Endothelial cell of umbilical vein (primary cell): ENCODE measurements at regions of chr20 and their contacts with region 1.

Region 1: DNA sequence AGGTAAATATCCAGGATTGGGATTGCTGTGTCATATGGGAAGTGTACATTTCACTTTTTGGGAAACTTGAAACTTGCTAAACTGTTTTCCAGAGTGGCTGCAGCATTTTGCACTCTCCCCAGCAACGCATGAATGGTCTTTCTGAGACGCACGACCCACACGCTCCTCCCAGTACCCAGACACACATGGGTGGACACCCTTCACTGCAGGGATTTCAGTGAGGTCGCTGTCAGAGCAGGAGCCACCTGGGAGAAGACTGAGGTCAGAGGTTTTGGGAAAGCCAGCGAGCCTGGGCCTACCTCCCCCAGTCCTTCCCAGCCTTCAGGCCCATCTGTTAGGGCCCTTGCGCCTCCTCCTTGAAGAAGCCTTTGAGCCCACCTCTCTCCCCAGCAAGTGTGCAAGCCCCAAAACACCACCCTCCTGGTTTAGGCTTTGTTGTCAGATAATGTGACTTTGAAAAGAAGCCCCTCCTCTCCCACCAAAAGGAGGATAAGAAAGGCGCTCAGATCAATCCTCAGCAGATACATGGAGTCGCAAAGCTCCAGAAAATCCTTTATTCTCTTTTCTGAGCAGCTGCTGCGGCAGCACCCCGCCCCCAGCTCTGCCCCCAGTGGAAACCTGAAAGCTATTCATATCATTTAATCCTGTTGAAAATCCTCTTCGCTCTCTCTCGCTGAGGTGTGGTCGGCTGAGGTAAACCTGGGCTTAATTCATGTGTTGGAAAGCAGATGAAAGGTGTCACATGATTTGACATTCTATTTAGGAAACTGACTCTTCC is 12.7 kb upstream of the JAG1 start:
- DNase-seq: no peak
- H3K4me3 ChIP-seq: no peak overlapping the region
- H3K27ac ChIP-seq: no peak overlapping the region
- H3K4me1 ChIP-seq: no peaks in the 10 kb centered on the region
- H3K27me3 ChIP-seq: no peaks in the 10 kb centered on the region
- CTCF ChIP-seq: no peak
- POLR2A ChIP-seq: no peak

Region 2: GRCh38 chr20:10501402-10501801 is 185.1 kb before region 1 on chr20:
- CTCF ChIA-PET with region 1: no interaction called
- POLR2A ChIA-PET with region 1: no interaction called
- dilution Hi-C with region 1: no loop called
- intact Hi-C with region 1: no loop called
- DNase-seq: no peak
- H3K4me3 ChIP-seq: no peak overlapping the region
- H3K27ac ChIP-seq: no peak overlapping the region
- H3K4me1 ChIP-seq: peaks cover 6% of the 10 kb centered on the region
- H3K27me3 ChIP-seq: no peaks in the 10 kb centered on the region
- CTCF ChIP-seq: no peak
- POLR2A ChIP-seq: no peak

Region 3: GRCh38 chr20:10665791-10666190 is 20.8 kb before region 1 on chr20:
- CTCF ChIA-PET with region 1: no interaction called
- POLR2A ChIA-PET with region 1: no interaction called
- dilution Hi-C with region 1: no loop called
- intact Hi-C with region 1: no loop called
- DNase-seq: no peak
- H3K4me3 ChIP-seq: no peak overlapping the region
- H3K27ac ChIP-seq: peak overlapping the region; percentile 94
- H3K4me1 ChIP-seq: peaks cover 61% of the 10 kb centered on the region
- H3K27me3 ChIP-seq: no peaks in the 10 kb centered on the region
- CTCF ChIP-seq: no peak
- POLR2A ChIP-seq: no peak

Region 4: GRCh38 chr20:10696650-10697049 is 10.1 kb after region 1 on chr20:
- CTCF ChIA-PET with region 1: interaction called, 13 read pairs
- POLR2A ChIA-PET with region 1: no interaction called
- dilution Hi-C with region 1: no loop called
- intact Hi-C with region 1: no loop called
- DNase-seq: no peak
- H3K4me3 ChIP-seq: no peak overlapping the region
- H3K27ac ChIP-seq: no peak overlapping the region
- H3K4me1 ChIP-seq: no peaks in the 10 kb centered on the region
- H3K27me3 ChIP-seq: no peaks in the 10 kb centered on the region
- CTCF ChIP-seq: peak; percentile 37 to 42
- POLR2A ChIP-seq: no peak